Kidney (tissue), 22 donors: ENCODE measurements at regions of chr1 and their contacts with region 1.

Region 1: DNA sequence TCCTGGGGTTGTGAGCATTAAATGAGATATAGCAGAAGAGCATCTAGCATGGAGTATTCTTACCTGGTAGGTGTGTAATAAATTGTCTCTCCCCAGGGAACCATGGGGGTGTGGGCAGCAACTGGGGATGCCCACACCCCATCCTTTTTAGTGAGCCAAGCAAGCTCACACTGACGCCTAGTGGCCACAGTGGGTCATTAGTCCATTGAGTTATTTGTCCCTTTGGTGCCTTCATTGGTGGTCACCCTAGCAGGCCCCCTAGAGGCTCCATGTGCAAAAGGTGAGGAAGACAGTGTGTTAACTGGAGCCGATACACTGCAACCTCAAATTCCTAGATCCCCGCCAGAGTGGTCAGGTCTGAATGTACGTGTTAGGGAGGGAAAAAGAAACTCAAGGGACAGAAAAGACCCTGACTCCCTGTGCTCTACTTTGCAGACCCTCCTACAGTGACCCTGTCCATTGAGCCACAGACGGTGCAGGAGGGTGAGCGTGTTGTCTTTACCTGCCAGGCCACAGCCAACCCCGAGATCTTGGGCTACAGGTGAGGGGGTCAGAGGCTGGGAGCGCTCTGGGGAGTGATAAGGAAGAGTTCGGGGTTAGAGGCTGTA is 93.3 kb upstream of the CD1D start:
- DNase-seq: peak in 4 of 5 donors; percentile 85 to 95 (median 90)
- H3K4me3 ChIP-seq: no peak overlapping the region
- H3K27ac ChIP-seq: no peak overlapping the region
- H3K4me1 ChIP-seq: no peaks in the 10 kb centered on the region
- H3K27me3 ChIP-seq: no peaks in the 10 kb centered on the region
- CTCF ChIP-seq: peak; percentile 88

Region 2: GRCh38 chr1:157992031-157992832 is 95.2 kb before region 1 on chr1:
- intact Hi-C with region 1: loop called (anchors 10 kb)
- DNase-seq: peak; percentile 81 to 91 (median 84)
- H3K4me3 ChIP-seq: peak overlapping the region in 1 of 3 donors; percentile 89
- H3K27ac ChIP-seq: peak overlapping the region; percentile 78 to 92
- H3K4me1 ChIP-seq: peaks cover 3 to 13% (median 6%) of the 10 kb centered on the region in 3 donors
- H3K27me3 ChIP-seq: no peaks in the 10 kb centered on the region
- CTCF ChIP-seq: peak; percentile 95

Region 3: GRCh38 chr1:158035976-158036583 is 51.3 kb before region 1 on chr1:
- intact Hi-C with region 1: loop called (anchors 5 kb)
- DNase-seq: peak in 2 of 5 donors; percentile 66 to 79
- H3K4me3 ChIP-seq: no peak overlapping the region
- H3K27ac ChIP-seq: no peak overlapping the region
- H3K4me1 ChIP-seq: peaks cover 2 to 20% (median 11%) of the 10 kb centered on the region in 3 donors
- H3K27me3 ChIP-seq: no peaks in the 10 kb centered on the region
- CTCF ChIP-seq: peak; percentile 64